ENCODE measurements at regions of chr22 and their contacts with region 1.

Region 1: DNA sequence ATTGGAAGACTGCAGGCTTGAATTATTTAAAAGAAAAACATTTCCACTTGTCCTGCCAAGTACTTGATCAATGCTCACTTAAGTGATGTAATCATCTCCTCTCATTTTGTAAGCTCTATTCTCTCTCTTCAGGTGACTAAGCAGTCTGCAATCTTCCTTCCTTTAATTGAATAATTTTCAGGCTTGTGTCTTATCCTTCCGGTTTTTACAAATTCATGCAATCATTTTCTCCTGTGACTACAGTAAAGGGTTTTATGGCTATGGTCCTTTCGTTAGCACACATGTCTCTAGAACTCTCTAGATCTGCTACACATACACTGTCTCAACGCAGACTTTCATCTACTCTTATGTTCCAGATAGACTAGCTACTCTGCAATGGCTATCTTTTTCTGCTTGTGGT is 12.6 kb upstream of the UPB1 start:
- DNase-seq: peak; percentile 91
- H3K4me3 ChIP-seq: no peak overlapping the region
- H3K27ac ChIP-seq: peak overlapping the region; percentile 70
- H3K4me1 ChIP-seq: peaks cover 58% of the 10 kb centered on the region
- H3K27me3 ChIP-seq: no peaks in the 10 kb centered on the region
- CTCF ChIP-seq: no peak

Region 2: DNA sequence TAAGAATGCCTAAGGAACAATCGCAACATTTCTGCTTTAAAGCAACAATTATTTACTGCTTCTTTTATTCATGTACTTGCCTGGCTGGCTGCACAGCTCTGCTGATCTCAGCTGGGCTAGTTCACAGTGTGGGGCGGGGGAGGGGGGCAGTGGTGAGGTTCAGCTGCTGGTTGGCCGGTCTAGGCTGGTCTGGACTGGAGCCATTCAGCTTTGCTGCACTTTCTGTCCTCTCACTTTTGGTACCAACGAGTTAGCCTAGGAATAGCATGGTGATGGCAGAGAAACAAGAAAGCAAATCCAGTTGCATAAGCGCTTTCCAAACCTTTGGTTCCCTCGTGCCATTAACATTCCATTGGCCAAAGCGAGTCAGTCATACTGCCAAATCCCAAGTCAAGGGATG is 604.4 kb before region 1 on chr22:
- CTCF ChIA-PET with region 1: no interaction called
- POLR2A ChIA-PET with region 1: no interaction called
- intact Hi-C with region 1: no loop called
- DNase-seq: no peak
- H3K4me3 ChIP-seq: no peak overlapping the region
- H3K27ac ChIP-seq: no peak overlapping the region
- H3K4me1 ChIP-seq: no peaks in the 10 kb centered on the region
- H3K27me3 ChIP-seq: no peaks in the 10 kb centered on the region
- CTCF ChIP-seq: no peak

Region 3: DNA sequence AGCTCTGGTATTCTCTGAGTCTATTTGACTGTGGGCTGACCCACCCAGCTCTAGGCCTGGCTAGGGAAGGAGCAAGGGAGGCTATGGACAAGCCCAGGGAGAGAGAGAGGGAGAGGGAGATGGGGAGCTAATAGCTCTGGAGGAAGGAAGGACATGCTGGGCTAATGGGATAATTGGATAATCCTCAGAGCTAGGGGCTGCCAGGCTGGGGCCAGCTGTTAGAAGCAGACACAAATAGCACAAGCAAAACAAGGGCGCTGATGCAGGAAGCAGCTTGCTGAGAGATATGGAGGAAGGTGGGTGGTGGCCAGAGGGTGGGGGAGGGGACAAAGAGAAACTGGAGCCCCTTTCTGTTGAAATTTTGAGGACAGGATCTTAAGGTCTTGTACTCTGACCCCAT is 32.0 kb before region 1 on chr22:
- CTCF ChIA-PET with region 1: no interaction called
- POLR2A ChIA-PET with region 1: no interaction called
- intact Hi-C with region 1: loop called (anchors 2 kb)
- DNase-seq: peak; percentile 99
- H3K4me3 ChIP-seq: no peak overlapping the region
- H3K27ac ChIP-seq: peak overlapping the region; percentile 91
- H3K4me1 ChIP-seq: peaks cover 43% of the 10 kb centered on the region
- H3K27me3 ChIP-seq: no peaks in the 10 kb centered on the region
- CTCF ChIP-seq: no peak

Region 4: DNA sequence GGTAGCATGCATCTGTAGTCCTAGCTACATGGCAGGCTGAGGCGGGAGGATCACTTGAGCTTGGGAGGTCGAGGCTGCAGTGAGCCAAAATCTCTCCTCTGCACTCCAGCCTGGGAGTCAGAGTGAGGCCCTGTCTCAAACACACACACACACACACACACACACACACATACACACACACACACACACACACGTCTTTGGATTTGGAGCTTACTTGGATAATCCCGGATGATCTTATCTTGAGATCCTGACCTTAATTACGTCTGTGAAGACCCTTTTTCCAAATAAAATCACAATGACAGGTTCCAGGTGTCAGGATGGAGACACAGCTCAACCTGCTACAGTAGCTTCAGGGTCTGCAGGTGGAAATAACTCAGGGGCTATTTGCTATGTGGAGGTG is 13.7 kb after region 1 on chr22:
- CTCF ChIA-PET with region 1: interaction called, 12 read pairs
- POLR2A ChIA-PET with region 1: no interaction called
- intact Hi-C with region 1: no loop called
- DNase-seq: no peak
- H3K4me3 ChIP-seq: no peak overlapping the region
- H3K27ac ChIP-seq: no peak overlapping the region
- H3K4me1 ChIP-seq: no peaks in the 10 kb centered on the region
- H3K27me3 ChIP-seq: no peaks in the 10 kb centered on the region
- CTCF ChIP-seq: no peak

Measured in A673 (cell line).